ENCODE measurements at regions of chr11 and their contacts with region 1.

Region 1: DNA sequence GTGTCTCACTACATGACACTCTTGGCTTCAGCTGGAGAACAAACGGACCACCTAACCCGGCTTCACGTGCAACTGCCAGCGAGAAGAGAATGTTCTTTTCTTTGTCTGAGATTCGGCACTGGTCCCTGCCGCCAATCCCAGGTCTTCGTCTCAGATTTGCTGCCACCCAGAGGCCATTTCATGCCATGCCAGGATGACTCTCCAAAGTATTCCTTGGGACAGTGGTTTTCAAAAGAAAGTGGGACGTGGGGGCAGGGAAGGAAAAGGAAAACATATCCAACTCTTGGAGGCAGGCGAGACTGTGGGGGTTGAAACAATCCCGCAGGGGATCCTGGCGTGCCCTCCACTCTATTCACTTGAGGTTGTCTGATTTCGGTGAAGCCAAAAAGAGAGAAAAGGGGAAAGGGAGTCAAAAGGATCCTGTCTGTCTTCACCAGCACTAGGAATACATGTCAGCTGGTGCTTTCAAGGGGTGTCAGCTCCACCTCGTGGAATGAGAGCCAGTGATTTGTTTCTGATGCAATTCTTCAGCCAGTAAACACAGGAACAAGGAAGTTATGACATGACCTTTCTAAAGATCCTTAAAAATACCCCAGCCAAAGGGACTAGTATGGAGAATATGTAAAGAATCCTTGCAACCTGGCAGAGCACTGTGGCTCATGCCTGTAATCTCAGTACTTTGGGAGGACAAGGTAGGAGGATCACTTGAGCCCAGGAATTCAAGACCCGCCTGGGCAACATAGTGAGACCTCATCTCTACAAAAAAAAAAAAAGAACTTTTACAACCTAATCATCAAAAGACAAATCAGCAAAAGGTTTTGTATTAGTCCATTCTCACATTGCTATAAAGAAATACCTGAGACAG is 41.0 kb upstream of the APLNR start:
- DNase-seq: peak; percentile 43 to 84
- H3K4me3 ChIP-seq: peak overlapping the region in 1 of 4 experiments; percentile 37; a peak in 3 of 8 replicates
- H3K27ac ChIP-seq: peak overlapping the region; percentile 37; the same call in 1 of the 2 replicates
- H3K4me1 ChIP-seq: peaks cover 2 to 10% (median 5%) of the 10 kb centered on the region in 4 experiments; a peak in 6 of 7 replicates
- H3K27me3 ChIP-seq: peaks cover 0 to 2% (median 0%) of the 10 kb centered on the region in 4 experiments; a peak in 3 of 7 replicates
- CTCF ChIP-seq: peak; percentile 71 to 91 (median 72)
- EP300 ChIP-seq: no peak
- POLR2A ChIP-seq: peak in 1 of 2 experiments; percentile 25; a peak in 1 of 3 replicates
- RAD21 ChIP-seq: peak; percentile 70 to 75

Region 2: GRCh38 chr11:57237204-57237681 is 40.8 kb before region 1 on chr11 and contains the start of gene APLNR:
- CTCF ChIA-PET with region 1: no interaction called
- POLR2A ChIA-PET with region 1: no interaction called
- DNase-seq: no peak
- H3K4me3 ChIP-seq: no peak within 1 kb of the TSS
- H3K27ac ChIP-seq: no peak within 1 kb of the TSS
- H3K4me1 ChIP-seq: peaks cover 0 to 4% (median 1%) of the 10 kb centered on the region in 4 experiments; a peak in 4 of 7 replicates
- H3K27me3 ChIP-seq: no peaks in the 10 kb centered on the region; a peak in 2 of 7 replicates
- CTCF ChIP-seq: no peak
- EP300 ChIP-seq: no peak
- POLR2A ChIP-seq: no peak
- RAD21 ChIP-seq: no peak
- total RNA-seq, gene APLNR: 0.13 TPM in 1 of 2 replicates, not detected in the other

Region 3: DNA sequence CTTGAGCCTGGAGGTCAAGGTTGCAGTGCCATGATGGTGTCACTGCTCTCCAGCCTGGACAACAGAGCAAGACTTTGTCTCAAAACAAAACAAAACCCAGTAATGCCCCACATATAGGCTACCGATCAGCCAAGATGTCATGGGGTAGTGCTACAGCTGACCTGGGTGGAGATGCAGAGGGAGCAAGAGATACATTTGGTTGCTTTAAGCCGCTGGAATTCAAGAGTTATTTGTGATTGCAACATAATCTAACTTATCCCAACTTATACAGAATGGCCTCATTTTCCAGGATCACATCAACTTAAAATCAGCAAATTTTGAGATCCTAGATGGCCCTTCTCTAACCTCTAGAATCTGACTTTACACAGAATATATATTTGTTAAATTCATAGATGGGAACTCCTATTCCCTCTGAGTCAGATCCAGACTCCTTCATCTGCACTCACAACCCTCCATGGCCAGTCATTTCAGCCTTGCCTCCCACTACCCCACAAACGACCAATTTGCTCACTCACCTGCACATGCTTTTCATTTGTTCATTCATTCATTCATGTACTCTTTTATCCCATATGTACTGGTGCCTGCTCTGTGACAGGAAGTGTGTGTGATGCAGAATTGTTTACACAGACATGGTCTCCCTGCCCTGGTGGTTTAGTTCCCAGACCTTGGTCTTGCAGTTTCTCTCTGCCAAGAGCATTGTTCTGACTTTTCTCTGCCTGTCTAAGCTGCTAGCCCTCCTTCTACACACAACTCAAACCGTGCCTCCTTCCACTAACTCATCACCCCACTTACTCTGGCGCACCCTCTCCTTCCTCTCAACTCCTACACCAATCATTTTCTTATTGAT is 16.9 kb before region 1 on chr11:
- CTCF ChIA-PET with region 1: interaction called, 11 read pairs
- POLR2A ChIA-PET with region 1: interaction called, 6 read pairs
- DNase-seq: no peak
- H3K4me3 ChIP-seq: no peak overlapping the region
- H3K27ac ChIP-seq: no peak overlapping the region
- H3K4me1 ChIP-seq: peaks cover 0 to 4% (median 0%) of the 10 kb centered on the region in 4 experiments; a peak in 3 of 7 replicates
- H3K27me3 ChIP-seq: no peaks in the 10 kb centered on the region
- CTCF ChIP-seq: no peak
- EP300 ChIP-seq: no peak
- POLR2A ChIP-seq: no peak
- RAD21 ChIP-seq: no peak

Region 4: GRCh38 chr11:57294605-57295131 is 16.6 kb after region 1 on chr11:
- CTCF ChIA-PET with region 1: interaction called, 7 read pairs
- POLR2A ChIA-PET with region 1: interaction called, 25 read pairs
- DNase-seq: no peak
- H3K4me3 ChIP-seq: no peak overlapping the region
- H3K27ac ChIP-seq: no peak overlapping the region
- H3K4me1 ChIP-seq: peaks cover 0 to 5% (median 2%) of the 10 kb centered on the region in 4 experiments; a peak in 2 of 7 replicates
- H3K27me3 ChIP-seq: no peaks in the 10 kb centered on the region
- CTCF ChIP-seq: no peak
- EP300 ChIP-seq: no peak
- POLR2A ChIP-seq: no peak
- RAD21 ChIP-seq: no peak

Region 5: DNA sequence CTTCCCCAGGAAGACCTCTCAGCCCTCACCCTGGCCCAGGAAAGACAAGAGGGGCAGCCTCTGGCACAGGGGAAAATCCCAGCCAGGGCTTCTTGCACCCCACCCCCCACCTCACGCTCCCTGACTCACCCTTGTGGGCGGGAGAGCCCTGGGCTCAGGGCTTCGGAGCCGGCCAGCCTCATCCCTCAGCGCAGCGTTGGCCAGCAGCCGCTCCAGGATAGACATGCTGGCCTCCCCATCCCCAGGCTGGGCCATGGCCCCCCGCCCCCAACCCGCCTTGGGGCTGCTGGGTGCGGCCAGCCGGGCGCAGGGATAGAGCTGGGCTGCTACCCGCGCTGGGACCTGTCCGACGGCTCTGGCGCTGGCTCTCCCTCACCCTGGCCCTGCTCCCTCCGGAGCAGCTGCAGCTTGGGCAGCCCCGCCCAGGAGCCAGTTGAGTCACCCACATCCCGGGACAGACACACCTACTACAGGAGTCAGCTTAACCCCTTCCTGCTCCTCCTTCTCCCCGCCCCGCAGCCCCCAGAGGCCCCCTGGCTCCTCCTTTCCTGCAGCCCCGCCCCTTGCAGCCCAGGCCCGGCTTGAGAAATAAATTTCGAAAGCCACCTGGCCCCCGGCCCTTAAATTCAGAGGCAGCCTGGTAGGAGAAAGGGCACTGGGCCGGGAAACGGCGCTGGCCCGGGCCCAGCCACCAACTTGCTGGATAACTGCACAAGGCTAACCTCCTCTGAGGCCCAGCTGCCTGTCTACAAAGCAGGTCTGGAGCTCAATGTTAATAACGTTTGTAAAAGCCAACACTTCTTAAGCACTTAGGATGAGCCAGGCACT is 33.2 kb after region 1 on chr11:
- CTCF ChIA-PET with region 1: interaction called, 3 read pairs
- POLR2A ChIA-PET with region 1: interaction called, 10 read pairs
- DNase-seq: peak; percentile 83 to 94
- H3K4me3 ChIP-seq: peak overlapping the region; percentile 34 to 60 (median 42)
- H3K27ac ChIP-seq: peak overlapping the region; percentile 59; the same call in 1 of the 2 replicates
- H3K4me1 ChIP-seq: peaks cover 14 to 34% (median 24%) of the 10 kb centered on the region in 4 experiments
- H3K27me3 ChIP-seq: no peaks in the 10 kb centered on the region
- CTCF ChIP-seq: no peak
- EP300 ChIP-seq: peak in 1 of 2 experiments; percentile 53; a peak in 1 of 3 replicates
- POLR2A ChIP-seq: peak; percentile 52 to 83
- RAD21 ChIP-seq: no peak

Region 6: DNA sequence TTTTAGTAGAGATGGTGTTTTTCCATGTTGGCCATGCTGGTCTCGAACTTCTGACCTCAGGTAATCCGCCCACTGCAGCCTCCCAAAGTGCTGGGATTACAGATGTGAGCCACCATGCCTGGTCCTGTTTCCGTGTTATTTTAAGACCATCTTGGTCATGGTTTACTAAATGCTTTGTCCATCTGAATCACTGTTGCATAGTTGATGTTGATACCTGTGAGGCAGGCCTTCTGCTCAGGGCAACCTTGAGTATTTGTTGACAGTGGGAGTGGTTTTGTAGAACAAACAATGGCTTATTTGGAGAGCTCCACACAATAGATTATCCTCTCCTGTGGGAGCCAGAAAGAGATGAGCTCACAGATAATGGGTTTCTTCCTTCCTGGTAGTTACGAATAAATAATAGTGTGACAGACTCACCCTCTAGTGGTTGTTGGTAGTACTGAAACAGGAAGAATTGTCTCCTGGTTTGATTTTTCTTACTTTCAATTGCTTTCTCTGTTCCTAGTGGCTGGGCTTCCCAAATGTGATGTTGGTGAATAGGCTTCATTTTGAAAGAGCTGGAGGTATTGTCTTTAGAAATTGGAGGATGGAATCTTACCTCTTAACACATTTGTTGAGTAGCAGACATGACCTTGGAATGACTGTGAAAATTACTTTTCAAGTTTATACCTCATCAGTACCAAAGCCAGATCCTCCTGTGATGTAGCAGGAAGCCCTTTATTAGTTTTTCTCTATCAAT is 522.5 kb after region 1 on chr11:
- CTCF ChIA-PET with region 1: no interaction called
- POLR2A ChIA-PET with region 1: no interaction called
- DNase-seq: no peak
- H3K4me3 ChIP-seq: no peak overlapping the region
- H3K27ac ChIP-seq: no peak overlapping the region
- H3K4me1 ChIP-seq: peaks cover 0 to 2% (median 0%) of the 10 kb centered on the region in 4 experiments; a peak in 2 of 7 replicates
- H3K27me3 ChIP-seq: no peaks in the 10 kb centered on the region
- CTCF ChIP-seq: peak in 2 of 3 experiments; percentile 66 to 83; a peak in 3 of 4 replicates
- EP300 ChIP-seq: no peak
- POLR2A ChIP-seq: no peak
- RAD21 ChIP-seq: peak; percentile 95 to 97